ENCODE measurements at regions of chr19 and their contacts with region 1.

Region 1: DNA sequence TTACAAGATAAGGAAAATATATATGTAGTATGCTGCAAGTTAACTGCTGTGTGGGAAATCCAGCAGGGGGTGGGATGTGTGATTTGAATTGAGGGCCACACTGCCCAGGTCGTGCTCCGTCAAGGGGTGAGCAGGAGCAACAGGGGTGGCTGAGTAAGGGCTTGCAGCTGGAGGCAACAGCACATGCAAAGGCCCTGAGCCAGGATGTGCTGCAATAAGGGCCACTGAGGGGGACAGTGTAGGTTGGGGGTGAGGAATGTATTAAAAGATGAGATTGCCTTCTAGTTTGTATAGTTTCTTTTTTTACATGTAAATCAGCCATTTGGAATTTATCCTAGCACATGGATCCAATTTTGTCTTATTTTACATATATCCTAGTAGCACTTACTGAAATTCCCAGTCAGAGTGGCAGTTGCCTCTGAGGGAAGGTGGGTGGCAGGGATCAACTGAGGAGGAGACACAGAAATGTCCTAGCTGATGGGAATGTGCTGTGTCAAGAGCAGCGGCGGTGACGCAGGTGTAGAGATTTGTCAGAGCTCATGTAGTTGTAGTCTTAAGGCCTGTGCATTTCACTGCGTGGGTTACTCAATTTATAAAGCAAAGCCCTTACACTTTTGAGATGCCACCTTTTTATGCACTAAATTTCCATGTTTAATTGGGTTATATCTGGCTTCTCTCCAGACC is 5.4 kb upstream of the RBM42 start:
- H3K4me3 ChIP-seq: no peak overlapping the region
- H3K27ac ChIP-seq: peak overlapping the region; percentile 46; the same call in 1 of the 2 replicates
- H3K4me1 ChIP-seq: peaks cover 6% of the 10 kb centered on the region
- CTCF ChIP-seq: no peak

Region 2: DNA sequence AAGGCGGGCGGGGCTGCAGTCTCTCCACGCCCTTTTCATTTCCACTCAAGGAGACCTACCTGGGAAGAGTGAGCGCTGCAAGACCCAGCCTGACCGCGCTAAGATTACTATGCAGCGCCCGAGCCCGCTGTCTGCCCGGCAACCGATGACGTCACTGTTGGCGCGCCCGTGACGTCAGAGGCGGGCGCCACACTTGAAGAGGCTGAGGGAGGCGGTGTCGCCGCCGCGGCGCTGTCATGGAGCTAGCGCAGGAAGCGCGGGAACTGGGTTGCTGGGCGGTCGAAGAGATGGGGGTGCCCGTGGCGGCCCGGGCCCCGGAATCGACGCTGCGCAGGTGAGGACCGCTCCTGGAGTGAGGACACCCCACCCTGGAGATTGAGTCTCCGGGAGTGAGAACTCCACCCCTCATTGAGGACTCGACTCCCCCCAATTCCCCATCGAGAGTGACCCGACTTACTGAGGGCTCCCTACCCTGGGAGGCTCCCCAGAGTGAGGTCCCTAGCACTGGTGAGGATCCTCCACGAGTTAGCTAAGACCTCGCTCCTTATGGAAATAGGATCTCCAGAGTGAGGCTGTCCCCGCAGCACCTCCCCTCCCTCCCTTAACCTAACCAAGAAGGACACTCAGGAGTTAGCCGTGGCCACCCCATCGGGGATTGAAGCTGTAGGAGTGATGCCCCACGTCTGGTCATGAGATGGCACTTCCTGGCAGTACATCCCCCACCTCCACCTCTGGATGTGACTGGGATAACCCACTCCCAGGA is 10.7 kb before region 1 on chr19 and contains the start of gene HAUS5:
- CTCF ChIA-PET with region 1: interaction called, 7 read pairs
- POLR2A ChIA-PET with region 1: interaction called, 25 read pairs
- H3K4me3 ChIP-seq: peak within 1 kb of the TSS; percentile 68
- H3K27ac ChIP-seq: peak within 1 kb of the TSS; percentile 94
- H3K4me1 ChIP-seq: peaks cover 13% of the 10 kb centered on the region
- CTCF ChIP-seq: peak; percentile 88

Region 3: DNA sequence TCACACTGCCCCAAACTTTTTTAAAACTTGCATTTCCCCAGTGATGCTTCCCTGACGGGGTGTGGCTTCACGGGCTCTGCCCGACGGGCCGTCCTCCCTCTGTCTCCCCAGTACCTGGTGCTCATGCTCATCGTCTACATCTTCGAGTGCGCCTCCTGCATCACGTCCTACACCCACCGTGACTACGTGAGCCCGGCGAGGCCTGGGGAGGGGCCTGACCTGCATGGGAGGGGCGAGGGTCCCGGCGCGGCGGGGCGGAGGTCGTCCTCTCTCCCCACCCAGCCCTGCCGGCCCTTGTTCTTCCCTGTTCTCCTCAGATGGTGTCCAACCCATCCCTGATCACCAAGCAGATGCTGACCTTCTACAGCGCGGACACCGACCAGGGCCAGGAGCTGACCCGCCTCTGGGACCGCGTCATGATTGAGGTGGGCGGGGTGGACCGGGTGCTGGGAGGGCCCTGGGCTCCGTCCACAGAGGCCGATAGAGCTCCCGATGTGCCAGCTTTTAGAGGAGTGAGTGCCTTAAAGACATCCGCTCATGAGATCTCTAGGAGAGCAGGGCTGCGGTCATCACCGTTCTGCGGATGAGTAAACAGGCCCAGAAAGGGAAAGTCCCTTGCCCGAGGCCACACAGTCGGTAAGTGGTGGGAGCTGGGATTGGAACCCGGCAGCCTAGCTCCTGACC is 49.8 kb after region 1 on chr19:
- CTCF ChIA-PET with region 1: no interaction called
- POLR2A ChIA-PET with region 1: no interaction called
- H3K4me3 ChIP-seq: peak overlapping the region; percentile 33
- H3K27ac ChIP-seq: peak overlapping the region; percentile 41; the same call in 1 of the 2 replicates
- H3K4me1 ChIP-seq: peaks cover 6% of the 10 kb centered on the region
- CTCF ChIP-seq: no peak

Region 4: DNA sequence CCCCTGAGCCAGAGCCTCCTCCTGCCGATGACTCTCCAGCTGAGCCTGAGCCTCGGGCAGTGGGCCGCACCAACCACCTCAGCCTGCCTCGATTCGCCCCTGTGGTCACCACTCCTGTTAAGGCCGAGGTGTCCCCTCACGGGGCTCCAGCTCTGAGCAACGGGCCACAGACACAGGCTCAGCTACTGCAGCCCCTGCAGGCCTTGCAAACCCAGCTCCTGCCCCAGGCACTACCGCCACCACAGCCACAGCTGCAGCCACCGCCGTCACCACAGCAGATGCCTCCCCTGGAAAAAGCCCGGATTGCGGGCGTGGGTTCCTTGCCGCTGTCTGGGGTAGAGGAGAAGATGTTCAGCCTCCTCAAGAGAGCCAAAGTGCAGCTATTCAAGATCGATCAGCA is 97.9 kb after region 1 on chr19:
- CTCF ChIA-PET with region 1: no interaction called
- POLR2A ChIA-PET with region 1: no interaction called
- H3K4me3 ChIP-seq: no peak overlapping the region
- H3K27ac ChIP-seq: no peak overlapping the region; the same call in 1 of the 2 replicates
- H3K4me1 ChIP-seq: peaks cover 13% of the 10 kb centered on the region
- CTCF ChIP-seq: no peak

Measured in HEK293 (cell line).